Activated T-helper 2 cell treated with anti-CD3 and anti-CD28 coated beads, Interferon-gamma antibody, Interleukin-2, Interleukin-4, amounts not matched to agents 10 μg/mL and 5 μg/mL and 100 μg/mL, durations not matched to agents 14 hours and 24 hours and 36 hours (primary cell): ENCODE measurements at regions of chr16 and their contacts with region 1.

Region 1: GRCh38 chr16:53435066-53435688 is 906 bp downstream of the RBL2 start:
- DNase-seq: peak; percentile 63
- H3K4me3 Mint-ChIP-seq: peak overlapping the region; percentile 86
- H3K27ac Mint-ChIP-seq: peak overlapping the region; percentile 92
- H3K4me1 Mint-ChIP-seq: peaks cover 37% of the 10 kb centered on the region
- H3K27me3 Mint-ChIP-seq: no peaks in the 10 kb centered on the region

Region 2: GRCh38 chr16:53130159-53131049 is 304.8 kb before region 1 on chr16:
- intact Hi-C with region 1: loop called (anchors 2 kb)
- DNase-seq: peak; percentile 91
- H3K4me3 Mint-ChIP-seq: peak overlapping the region; percentile 78
- H3K27ac Mint-ChIP-seq: peak overlapping the region; percentile 67
- H3K4me1 Mint-ChIP-seq: peaks cover 23% of the 10 kb centered on the region
- H3K27me3 Mint-ChIP-seq: no peaks in the 10 kb centered on the region

Region 3: GRCh38 chr16:53503270-53503923 is 68.2 kb after region 1 on chr16:
- intact Hi-C with region 1: loop called (anchors 1 kb)
- DNase-seq: peak; percentile 100
- H3K4me3 Mint-ChIP-seq: peak overlapping the region; percentile 88
- H3K27ac Mint-ChIP-seq: peak overlapping the region; percentile 91
- H3K4me1 Mint-ChIP-seq: peaks cover 45% of the 10 kb centered on the region
- H3K27me3 Mint-ChIP-seq: no peaks in the 10 kb centered on the region

Region 4: GRCh38 chr16:53509906-53510703 is 74.9 kb after region 1 on chr16:
- intact Hi-C with region 1: loop called (anchors 2 kb)
- DNase-seq: no peak
- H3K4me3 Mint-ChIP-seq: no peak overlapping the region
- H3K27ac Mint-ChIP-seq: no peak overlapping the region
- H3K4me1 Mint-ChIP-seq: peaks cover 25% of the 10 kb centered on the region
- H3K27me3 Mint-ChIP-seq: no peaks in the 10 kb centered on the region

Region 5: DNA sequence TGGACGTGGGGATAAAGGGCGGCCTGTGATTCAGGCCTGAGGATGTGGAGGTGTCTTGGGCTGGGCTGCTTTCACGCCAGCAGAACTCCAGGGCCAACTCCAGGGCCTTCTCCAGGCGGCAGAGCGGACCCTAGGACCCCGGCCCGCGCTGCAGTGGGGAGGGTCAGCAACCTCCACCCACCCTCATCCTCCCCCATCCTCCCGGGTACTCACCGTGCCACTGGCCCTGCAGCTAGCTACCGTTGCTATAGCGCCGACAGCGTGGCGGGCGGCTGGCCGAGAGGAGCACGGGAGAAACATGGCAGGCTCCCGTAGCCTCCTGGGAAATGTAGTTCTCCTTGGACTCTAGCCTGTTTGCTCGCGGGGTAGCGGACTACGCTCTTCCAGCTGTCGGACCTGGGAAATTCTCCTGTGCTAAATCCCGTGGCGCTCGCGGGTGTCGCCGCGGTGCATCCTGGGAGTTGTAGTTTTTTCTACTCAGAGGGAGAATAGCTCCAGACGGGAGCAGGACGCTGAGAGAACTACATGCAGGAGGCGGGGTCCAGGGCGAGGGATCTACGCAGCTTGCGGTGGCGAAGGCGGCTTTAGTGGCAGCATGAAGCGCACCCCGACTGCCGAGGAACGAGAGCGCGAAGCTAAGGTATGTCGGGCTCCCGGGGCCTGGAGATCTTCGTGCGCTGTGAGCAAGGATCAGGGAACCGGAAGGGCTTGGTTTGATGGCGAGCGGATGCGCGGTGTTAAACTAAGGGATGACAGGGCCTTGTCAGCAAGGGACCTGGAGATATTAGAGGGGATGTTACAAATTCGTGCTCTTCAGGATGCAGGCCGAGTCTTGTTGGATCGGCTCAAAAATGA is 268.6 kb after region 1 on chr16 and contains the starts of genes FTO and RPGRIP1L:
- intact Hi-C with region 1: loop called (anchors 2 kb)
- DNase-seq: peak; percentile 97
- H3K4me3 Mint-ChIP-seq: peak within 1 kb of the TSS; percentile 100
- H3K27ac Mint-ChIP-seq: peak within 1 kb of the TSS; percentile 98
- H3K4me1 Mint-ChIP-seq: peaks cover 25% of the 10 kb centered on the region
- H3K27me3 Mint-ChIP-seq: no peaks in the 10 kb centered on the region
- total RNA-seq, gene FTO: 62.1 and 62.7 TPM in 2 replicates
- total RNA-seq, gene RPGRIP1L: 7.7 and 9.6 TPM in 2 replicates